ENCODE measurements at regions of chr14 and their contacts with region 1.

Region 1: DNA sequence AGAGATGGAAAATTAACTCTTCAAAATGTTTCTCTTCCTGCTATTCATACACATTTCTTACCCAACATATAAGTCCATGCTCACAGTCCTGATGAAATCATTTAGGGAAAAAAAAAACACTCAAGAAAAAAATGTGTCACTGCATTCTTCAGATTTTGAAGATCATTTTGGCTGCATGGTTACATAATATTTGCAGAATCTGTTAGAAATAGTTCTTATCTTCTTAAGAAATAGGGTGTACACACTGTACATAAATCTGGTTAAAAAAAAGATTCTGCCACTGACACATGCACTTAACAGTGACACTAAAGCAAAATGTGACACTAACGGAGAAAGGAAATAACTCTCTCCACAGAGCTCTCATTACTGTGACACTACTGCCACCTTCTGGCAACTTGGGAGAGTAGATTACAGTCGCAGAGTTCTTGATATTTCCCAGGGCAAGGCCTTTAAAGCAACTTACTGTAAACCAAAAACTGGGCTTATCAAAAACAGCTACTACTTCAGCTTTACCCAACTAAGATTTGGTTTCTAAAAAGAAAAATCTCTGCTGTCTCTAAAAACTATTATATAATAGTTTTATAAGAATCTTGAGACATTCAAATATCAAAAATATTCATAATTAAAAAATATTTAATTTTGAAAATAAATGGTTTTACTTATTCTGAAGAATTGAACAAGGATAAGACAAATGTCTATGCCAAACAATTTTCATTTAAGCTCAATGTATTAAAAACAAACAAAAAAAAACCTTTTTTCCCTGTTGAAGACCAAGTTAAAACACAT is 65.0 kb downstream of the SETD3 start:
- DNase-seq: peak; percentile 33 to 90 (median 64)
- ATAC-seq: peak; percentile 99
- H3K4me3 ChIP-seq: no peak overlapping the region
- H3K4me3 Mint-ChIP-seq: no peak overlapping the region
- H3K27ac ChIP-seq: no peak overlapping the region
- H3K27ac Mint-ChIP-seq: no peak overlapping the region
- H3K4me1 ChIP-seq: no peaks in the 10 kb centered on the region
- H3K4me1 Mint-ChIP-seq: peaks cover 5% of the 10 kb centered on the region
- H3K27me3 ChIP-seq: no peaks in the 10 kb centered on the region
- H3K27me3 Mint-ChIP-seq: no peaks in the 10 kb centered on the region
- CTCF ChIP-seq: peak; percentile 92

Region 2: GRCh38 chr14:99320105-99320572 is 95.5 kb before region 1 on chr14:
- CTCF ChIA-PET with region 1: interaction called, 7 read pairs
- POLR2A ChIA-PET with region 1: no interaction called
- intact Hi-C with region 1: loop called in 1 of 2 experiments (anchors 1 kb)
- DNase-seq: peak; percentile 44 to 88 (median 67)
- ATAC-seq: peak; percentile 79
- H3K4me3 ChIP-seq: peak overlapping the region in 1 of 2 experiments; percentile 35
- H3K4me3 Mint-ChIP-seq: peak overlapping the region; percentile 11
- H3K27ac ChIP-seq: peak overlapping the region in 1 of 2 experiments; percentile 44
- H3K27ac Mint-ChIP-seq: no peak overlapping the region
- H3K4me1 ChIP-seq: no peaks in the 10 kb centered on the region
- H3K4me1 Mint-ChIP-seq: peaks cover 7% of the 10 kb centered on the region
- H3K27me3 ChIP-seq: no peaks in the 10 kb centered on the region
- H3K27me3 Mint-ChIP-seq: no peaks in the 10 kb centered on the region
- CTCF ChIP-seq: peak; percentile 84

Region 3: GRCh38 chr14:99374964-99375363 is 40.7 kb before region 1 on chr14:
- CTCF ChIA-PET with region 1: no interaction called
- POLR2A ChIA-PET with region 1: no interaction called
- intact Hi-C with region 1: no loop called
- DNase-seq: no peak
- ATAC-seq: no peak
- H3K4me3 ChIP-seq: no peak overlapping the region
- H3K4me3 Mint-ChIP-seq: no peak overlapping the region
- H3K27ac ChIP-seq: no peak overlapping the region
- H3K27ac Mint-ChIP-seq: no peak overlapping the region
- H3K4me1 ChIP-seq: no peaks in the 10 kb centered on the region
- H3K4me1 Mint-ChIP-seq: no peaks in the 10 kb centered on the region
- H3K27me3 ChIP-seq: no peaks in the 10 kb centered on the region
- H3K27me3 Mint-ChIP-seq: peaks cover 7% of the 10 kb centered on the region
- CTCF ChIP-seq: no peak

Region 4: DNA sequence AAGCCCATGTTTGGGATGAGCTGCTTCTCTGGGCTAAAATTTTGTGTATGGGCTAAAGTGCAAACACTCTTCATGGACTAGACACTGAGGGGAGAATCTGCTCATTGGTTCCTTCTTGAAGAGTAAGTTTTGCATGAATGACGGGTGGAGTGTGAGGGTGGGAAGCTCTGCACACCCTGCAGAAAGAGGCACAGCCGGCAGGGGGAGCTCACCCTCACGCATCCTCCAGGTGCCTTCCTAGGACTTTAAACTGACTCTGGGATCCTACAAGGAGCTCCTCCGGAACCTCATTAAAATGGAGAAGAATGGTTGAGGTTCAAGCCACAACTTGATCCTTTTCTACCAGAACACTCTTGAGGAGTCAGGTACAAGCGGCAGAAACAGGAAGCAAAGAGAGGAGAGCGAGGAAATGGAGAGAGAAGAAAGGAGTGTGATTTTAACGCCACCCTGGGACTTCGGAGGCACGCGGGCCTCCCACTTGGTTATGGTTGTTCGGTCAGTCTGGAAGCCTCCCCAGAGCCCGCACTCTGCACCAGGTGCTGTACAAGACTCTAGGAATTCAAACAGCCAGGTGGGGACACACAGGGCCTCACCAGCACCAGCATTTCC is 22.5 kb before region 1 on chr14:
- CTCF ChIA-PET with region 1: interaction called, 52 read pairs
- POLR2A ChIA-PET with region 1: no interaction called
- intact Hi-C with region 1: loop called (anchors 1 kb)
- DNase-seq: peak in 4 of 9 experiments; percentile 32 to 50 (median 41)
- ATAC-seq: no peak
- H3K4me3 ChIP-seq: no peak overlapping the region
- H3K4me3 Mint-ChIP-seq: no peak overlapping the region
- H3K27ac ChIP-seq: no peak overlapping the region
- H3K27ac Mint-ChIP-seq: no peak overlapping the region
- H3K4me1 ChIP-seq: no peaks in the 10 kb centered on the region
- H3K4me1 Mint-ChIP-seq: peaks cover 14% of the 10 kb centered on the region
- H3K27me3 ChIP-seq: no peaks in the 10 kb centered on the region
- H3K27me3 Mint-ChIP-seq: no peaks in the 10 kb centered on the region
- CTCF ChIP-seq: peak; percentile 45

Region 5: DNA sequence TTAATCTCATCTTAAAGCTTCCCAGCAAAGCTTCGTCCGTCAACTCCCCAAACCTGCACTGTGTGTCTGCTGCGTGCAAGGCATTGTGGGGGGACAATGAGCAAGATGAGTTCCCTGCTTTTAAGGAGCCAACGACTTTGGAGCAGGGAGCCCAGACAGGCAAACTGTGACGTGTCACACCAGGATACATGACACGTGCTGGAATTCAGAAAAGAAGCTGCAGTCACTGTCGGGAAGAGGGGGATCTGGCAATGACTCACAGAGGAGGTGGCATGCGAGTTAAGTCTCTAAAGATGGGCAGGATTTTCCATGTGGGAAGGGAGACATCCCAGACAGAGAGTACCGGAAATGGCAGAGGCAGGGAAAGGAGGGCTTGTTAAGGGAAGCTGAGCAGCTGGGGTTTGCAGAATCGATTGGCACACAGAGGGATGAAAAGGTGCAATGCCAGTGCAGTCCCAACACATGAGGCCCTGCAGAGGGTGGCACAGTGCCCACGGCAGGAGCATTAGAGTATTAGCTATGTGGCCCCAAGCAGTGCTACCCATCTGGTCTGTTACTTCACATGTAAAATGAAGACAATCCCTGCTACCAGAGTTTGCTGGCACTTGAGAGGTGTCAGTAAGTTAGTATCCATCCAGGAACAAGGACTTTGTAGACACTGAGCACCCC is 12.1 kb after region 1 on chr14:
- CTCF ChIA-PET with region 1: interaction called, 18 read pairs
- POLR2A ChIA-PET with region 1: interaction called, 3 read pairs
- intact Hi-C with region 1: no loop called
- DNase-seq: no peak
- ATAC-seq: no peak
- H3K4me3 ChIP-seq: no peak overlapping the region
- H3K4me3 Mint-ChIP-seq: no peak overlapping the region
- H3K27ac ChIP-seq: no peak overlapping the region
- H3K27ac Mint-ChIP-seq: no peak overlapping the region
- H3K4me1 ChIP-seq: no peaks in the 10 kb centered on the region
- H3K4me1 Mint-ChIP-seq: peaks cover 30% of the 10 kb centered on the region
- H3K27me3 ChIP-seq: no peaks in the 10 kb centered on the region
- H3K27me3 Mint-ChIP-seq: no peaks in the 10 kb centered on the region
- CTCF ChIP-seq: no peak